ENCODE measurements at regions of chr4 and their contacts with region 1.

Region 1: DNA sequence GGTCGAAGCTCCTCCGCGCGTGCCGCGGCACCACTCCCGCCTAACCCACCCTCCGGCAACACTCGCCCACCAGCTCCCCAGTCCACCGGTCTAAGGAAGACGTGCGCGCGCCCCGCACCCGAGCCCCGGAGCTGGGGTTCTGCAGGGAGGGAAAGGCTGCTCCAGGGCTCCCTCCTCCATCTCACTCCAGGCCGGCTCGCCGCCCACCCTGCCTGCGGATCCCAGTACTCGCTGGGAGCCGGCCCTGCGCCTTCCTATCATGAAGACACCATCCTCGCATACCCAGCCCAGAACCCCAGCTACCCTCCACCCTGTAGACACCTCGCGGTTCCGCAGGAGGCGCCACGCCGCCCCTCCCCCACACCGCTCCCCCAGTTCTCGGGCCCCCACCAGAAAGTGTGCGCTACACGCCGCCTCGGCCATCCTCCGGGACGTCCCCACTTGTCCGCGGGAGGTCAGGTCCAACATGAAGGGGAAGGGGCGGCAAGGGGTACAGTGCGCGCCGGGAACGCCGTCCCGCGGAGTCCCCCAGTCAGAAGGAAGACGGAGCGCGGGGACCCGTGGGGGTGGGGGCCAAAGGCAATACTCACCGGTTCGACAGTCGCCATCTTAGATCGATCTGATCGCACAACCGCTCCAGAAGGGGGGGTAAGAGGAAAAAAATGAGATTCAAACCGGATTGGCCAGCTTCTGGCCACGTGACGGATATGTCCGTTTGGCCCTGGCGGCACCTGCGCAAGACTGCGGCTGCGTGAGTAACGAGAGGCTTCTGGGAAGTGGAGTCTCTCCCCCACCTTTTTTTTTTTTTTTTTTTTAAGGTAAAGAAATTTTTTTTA is at the start of gene EIF4E:
- DNase-seq: peak; percentile 99
- H3K4me3 ChIP-seq: peak within 1 kb of the TSS; percentile 96 to 99 (median 99)
- H3K27ac ChIP-seq: peak within 1 kb of the TSS; percentile 99
- H3K4me1 ChIP-seq: peaks cover 7% of the 10 kb centered on the region
- H3K27me3 ChIP-seq: no peaks in the 10 kb centered on the region
- CTCF ChIP-seq: peak; percentile 2 to 22
- total RNA-seq, gene EIF4E: 104 to 113 TPM

Region 2: DNA sequence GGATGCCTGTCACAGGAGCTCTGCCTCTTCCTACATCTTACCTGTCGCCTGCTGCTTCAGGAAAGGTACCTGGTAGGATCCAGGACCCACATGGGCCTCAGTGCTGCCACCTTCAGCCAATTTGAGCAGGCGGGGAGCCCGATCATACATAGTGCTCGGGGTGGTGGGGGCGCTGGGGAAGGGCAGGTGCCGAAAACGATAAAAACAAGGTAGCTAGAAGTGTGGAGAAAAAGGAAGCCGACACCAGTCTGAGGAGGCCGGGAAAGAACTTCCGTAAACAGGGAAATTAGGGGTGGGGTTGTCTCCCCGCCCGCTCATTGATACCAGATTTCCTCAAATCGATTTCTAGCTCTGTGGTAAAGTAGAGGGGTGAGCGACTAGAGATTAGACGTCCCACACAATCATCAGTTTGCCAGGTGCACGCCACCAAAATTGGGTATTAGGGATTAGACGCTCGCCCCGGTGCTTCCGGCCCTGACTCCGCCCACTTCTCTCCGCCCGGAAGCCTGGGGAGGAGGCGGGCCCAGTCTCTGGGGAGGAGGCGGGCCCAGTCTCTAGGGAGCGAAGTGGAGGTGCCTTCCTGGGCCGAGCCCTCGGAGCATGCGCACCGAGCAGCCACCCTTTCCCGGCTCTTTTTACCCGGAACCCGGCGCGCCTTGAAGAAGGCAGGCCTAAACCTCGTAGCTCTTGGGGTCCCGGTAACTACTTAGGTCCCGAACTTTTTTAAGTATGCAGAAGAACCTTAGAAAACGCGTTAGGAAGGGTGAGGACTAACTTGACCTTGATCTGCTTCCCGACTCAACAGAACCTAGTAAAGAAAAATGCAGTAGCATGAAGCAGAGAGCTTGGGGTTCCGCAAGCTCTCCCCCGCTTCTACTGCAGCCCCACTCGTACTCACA is 785.5 kb before region 1 on chr4 and contains the start of gene STPG2:
- CTCF ChIA-PET with region 1: no interaction called
- dilution Hi-C with region 1: no loop called
- in situ Hi-C with region 1: no loop called
- intact Hi-C with region 1: loop called (anchors 10 kb)
- DNase-seq: peak; percentile 93
- H3K4me3 ChIP-seq: peak within 1 kb of the TSS; percentile 64 to 76 (median 69)
- H3K27ac ChIP-seq: peak within 1 kb of the TSS; percentile 78
- H3K4me1 ChIP-seq: peaks cover 12% of the 10 kb centered on the region
- H3K27me3 ChIP-seq: no peaks in the 10 kb centered on the region
- CTCF ChIP-seq: peak; percentile 53 to 73
- total RNA-seq, gene STPG2: 0.17 to 0.28 TPM

Region 3: GRCh38 chr4:98658287-98659105 is 270.2 kb before region 1 on chr4 and contains the start of gene TSPAN5:
- CTCF ChIA-PET with region 1: no interaction called
- dilution Hi-C with region 1: no loop called
- in situ Hi-C with region 1: no loop called
- intact Hi-C with region 1: loop called (anchors 10 kb)
- DNase-seq: peak; percentile 80
- H3K4me3 ChIP-seq: peak within 1 kb of the TSS; percentile 65 to 89 (median 83)
- H3K27ac ChIP-seq: peak within 1 kb of the TSS; percentile 57
- H3K4me1 ChIP-seq: peaks cover 57% of the 10 kb centered on the region
- H3K27me3 ChIP-seq: no peaks in the 10 kb centered on the region
- CTCF ChIP-seq: no peak
- total RNA-seq, gene TSPAN5: 19.0 to 38.4 TPM

Region 4: DNA sequence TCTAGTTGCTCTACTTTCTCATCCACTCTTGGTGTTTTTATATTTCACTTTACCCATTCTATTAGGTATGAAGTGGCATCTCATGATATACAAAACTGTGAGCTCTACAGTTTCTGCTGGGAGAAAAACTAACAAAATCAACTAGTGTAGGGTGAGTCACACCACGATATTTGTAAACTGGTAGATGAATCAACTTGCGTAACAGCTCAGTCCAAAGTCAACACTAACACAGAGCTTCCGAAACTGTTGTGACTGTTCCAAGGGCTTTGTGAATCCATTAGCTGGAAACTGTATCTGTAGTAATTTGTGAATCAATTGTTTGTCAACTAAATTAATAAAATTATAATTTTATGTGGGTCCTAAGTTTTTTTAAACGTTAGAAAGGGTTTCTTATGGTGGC is 150.5 kb before region 1 on chr4:
- CTCF ChIA-PET with region 1: no interaction called
- dilution Hi-C with region 1: no loop called
- in situ Hi-C with region 1: no loop called
- intact Hi-C with region 1: no loop called
- DNase-seq: peak; percentile 89
- H3K4me3 ChIP-seq: no peak overlapping the region
- H3K27ac ChIP-seq: no peak overlapping the region
- H3K4me1 ChIP-seq: no peaks in the 10 kb centered on the region
- H3K27me3 ChIP-seq: no peaks in the 10 kb centered on the region
- CTCF ChIP-seq: no peak

Region 5: GRCh38 chr4:98939892-98940298 is 11.2 kb after region 1 on chr4:
- CTCF ChIA-PET with region 1: interaction called, 20 read pairs
- dilution Hi-C with region 1: no loop called
- in situ Hi-C with region 1: no loop called
- intact Hi-C with region 1: no loop called
- DNase-seq: peak; percentile 49
- H3K4me3 ChIP-seq: no peak overlapping the region
- H3K27ac ChIP-seq: no peak overlapping the region
- H3K4me1 ChIP-seq: peaks cover 9% of the 10 kb centered on the region
- H3K27me3 ChIP-seq: no peaks in the 10 kb centered on the region
- CTCF ChIP-seq: peak; percentile 81 to 84

Region 6: DNA sequence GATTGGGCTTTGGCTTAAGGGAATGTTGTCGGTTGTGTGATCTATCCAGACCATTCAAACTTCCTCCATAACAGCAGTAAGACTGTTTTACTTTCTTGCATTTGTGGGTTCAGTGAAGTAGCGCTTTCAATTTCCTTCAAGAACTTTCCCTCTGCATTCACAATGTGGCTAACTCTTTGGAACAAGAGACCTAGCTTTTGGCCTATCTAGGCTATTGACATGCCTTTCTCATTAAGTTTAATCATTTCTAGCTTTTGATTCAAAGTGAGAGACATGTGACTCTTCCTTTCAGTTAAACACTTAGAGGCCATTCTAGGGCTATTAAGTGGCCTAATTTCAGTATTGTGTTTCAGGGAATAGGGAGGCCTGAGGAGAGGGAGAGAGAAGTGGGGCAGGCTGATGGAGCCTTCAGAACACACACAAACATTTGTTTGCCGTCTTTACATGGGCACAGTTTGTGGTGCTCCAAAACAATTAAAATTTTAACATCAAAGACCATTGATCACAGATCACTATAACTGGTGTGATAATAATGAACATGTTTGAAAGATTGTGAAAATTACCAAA is 125.8 kb after region 1 on chr4:
- CTCF ChIA-PET with region 1: no interaction called
- dilution Hi-C with region 1: no loop called
- in situ Hi-C with region 1: no loop called
- intact Hi-C with region 1: loop called (anchors 2 kb)
- DNase-seq: no peak
- H3K4me3 ChIP-seq: no peak overlapping the region
- H3K27ac ChIP-seq: no peak overlapping the region
- H3K4me1 ChIP-seq: peaks cover 13% of the 10 kb centered on the region
- H3K27me3 ChIP-seq: no peaks in the 10 kb centered on the region
- CTCF ChIP-seq: no peak

Region 7: DNA sequence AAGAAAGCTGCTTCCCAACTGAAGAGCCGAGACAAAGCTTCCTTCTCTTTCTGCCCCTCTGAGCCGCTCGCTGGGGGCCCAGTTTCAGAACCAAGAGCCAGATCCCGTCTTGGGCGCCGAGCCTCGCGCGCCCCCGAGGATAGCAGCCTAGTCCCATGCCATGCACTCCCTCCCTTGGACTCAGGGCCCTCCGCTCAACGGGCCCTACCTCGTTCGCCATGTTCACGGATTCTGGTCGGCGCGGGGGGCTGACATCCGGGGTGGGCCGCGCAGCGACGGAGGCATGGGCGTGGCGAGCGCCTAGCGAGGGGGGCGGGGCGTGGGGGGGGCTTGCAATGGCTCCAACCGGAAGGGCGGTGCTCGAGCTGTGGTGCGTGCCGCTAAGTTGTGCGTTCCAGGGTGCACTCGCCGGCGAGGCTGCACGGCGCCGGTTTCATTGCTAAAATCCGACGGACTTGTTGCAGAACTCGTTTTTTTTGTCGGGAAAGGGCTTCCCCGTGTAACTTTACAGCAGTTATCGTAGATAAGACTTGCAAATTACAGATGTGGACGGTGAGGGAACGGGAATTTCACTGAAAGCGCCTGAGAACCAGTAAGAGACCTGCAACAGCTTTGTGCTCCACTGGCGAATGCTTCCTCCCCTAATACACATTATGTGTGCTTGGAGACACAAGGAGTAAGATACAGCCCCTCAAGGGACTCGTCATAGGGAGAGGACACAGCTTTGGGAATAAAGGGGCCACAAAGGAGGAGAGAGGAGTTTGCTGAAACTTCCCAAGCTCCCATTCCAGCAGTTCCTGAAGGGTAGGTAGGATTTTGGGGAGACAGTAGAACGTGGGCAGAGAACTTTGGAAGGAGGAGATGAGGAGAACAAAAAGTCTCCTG is 160.0 kb after region 1 on chr4 and contains the start of gene ADH5:
- CTCF ChIA-PET with region 1: no interaction called
- dilution Hi-C with region 1: no loop called
- in situ Hi-C with region 1: no loop called
- intact Hi-C with region 1: loop called (anchors 1 kb)
- DNase-seq: peak; percentile 80
- H3K4me3 ChIP-seq: peak within 1 kb of the TSS; percentile 65 to 97 (median 84)
- H3K27ac ChIP-seq: peak within 1 kb of the TSS; percentile 94
- H3K4me1 ChIP-seq: peaks cover 22% of the 10 kb centered on the region
- H3K27me3 ChIP-seq: no peaks in the 10 kb centered on the region
- CTCF ChIP-seq: no peak
- total RNA-seq, gene ADH5: 192 to 237 TPM

Measured in mammary epithelial cell (primary cell).